ENCODE measurements at regions of chr18 and their contacts with region 1.

Region 1: DNA sequence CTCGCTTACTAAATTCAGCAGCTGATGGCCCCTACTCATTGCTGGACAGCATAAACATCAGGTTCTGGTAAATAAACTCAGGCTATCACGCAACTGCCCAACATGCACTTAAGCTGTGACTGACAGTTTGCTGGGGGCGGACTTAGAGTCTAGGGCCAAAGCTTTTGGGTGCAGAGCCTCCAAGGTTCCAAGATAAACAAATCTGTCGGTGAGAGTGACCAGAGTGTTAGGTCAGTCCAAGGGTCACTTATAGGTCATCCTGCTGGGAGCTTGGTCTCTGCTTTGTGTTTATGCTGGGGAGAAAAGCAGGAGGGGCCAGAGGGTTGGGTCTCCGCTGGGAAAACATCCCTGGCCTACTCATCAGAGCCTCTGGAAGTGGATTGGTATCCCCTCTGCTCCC is 188.6 kb upstream of the GATA6 start:
- DNase-seq: no peak
- ATAC-seq: no peak
- H3K4me3 ChIP-seq: no peak overlapping the region
- H3K27ac ChIP-seq: no peak overlapping the region
- H3K4me1 ChIP-seq: no peaks in the 10 kb centered on the region
- H3K27me3 ChIP-seq: no peaks in the 10 kb centered on the region
- CTCF ChIP-seq: no peak
- EP300 ChIP-seq: no peak
- POLR2A ChIP-seq: no peak
- RAD21 ChIP-seq: no peak

Region 2: DNA sequence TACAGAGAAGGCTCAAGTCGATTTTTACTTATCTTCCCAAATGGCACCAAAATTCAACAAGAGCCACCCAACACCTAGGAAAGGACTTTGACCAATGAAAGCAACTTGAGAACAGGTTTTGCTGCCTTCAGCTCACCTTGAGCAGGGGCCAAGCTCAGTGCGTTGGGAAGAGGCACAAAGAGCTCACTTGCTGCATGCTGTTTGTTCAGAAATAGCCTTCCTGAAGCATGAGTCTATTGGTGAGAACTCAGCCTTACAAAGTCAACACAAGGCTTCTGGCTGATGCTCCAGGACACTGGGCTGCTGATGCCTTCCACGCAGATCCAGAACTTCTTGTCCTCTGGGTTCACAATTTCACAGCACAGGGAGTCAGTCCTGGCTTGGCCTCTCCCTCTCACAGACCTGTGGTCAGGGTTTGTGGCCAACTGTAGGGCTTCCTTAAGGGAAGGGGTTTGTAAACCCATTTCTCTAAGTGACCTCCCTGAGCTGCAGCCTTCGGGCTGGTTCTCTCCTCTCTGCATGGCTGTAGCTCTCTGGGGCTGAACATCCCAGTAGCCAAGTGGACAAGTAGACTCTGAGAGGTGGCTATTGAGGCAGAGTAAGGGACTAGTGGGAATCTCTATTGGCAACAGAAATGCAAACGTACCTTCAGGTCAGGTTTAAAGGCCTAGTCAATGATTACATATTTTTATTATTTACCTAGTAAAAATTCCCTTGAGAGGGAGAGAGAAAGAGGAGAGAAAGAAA is 63.9 kb after region 1 on chr18:
- CTCF ChIA-PET with region 1: no interaction called
- POLR2A ChIA-PET with region 1: no interaction called
- RAD21 ChIA-PET with region 1: no interaction called
- SMC1A ChIA-PET with region 1: no interaction called
- in situ Hi-C with region 1: loop called (anchors 10 kb)
- intact Hi-C with region 1: loop called (anchors 10 kb)
- DNase-seq: no peak
- ATAC-seq: no peak
- H3K4me3 ChIP-seq: no peak overlapping the region
- H3K27ac ChIP-seq: no peak overlapping the region
- H3K4me1 ChIP-seq: no peaks in the 10 kb centered on the region
- H3K27me3 ChIP-seq: no peaks in the 10 kb centered on the region; a peak in 2 of 4 replicates
- CTCF ChIP-seq: no peak
- EP300 ChIP-seq: no peak
- POLR2A ChIP-seq: no peak
- RAD21 ChIP-seq: no peak